HEK293 (cell line): ENCODE measurements at regions of chr12 and their contacts with region 1.

Region 1: GRCh38 chr12:9750276-9751203 is 10.2 kb downstream of the CD69 start:
- H3K4me3 ChIP-seq: no peak overlapping the region
- H3K27ac ChIP-seq: no peak overlapping the region
- H3K4me1 ChIP-seq: no peaks in the 10 kb centered on the region
- CTCF ChIP-seq: no peak; the same call in 1 of the 2 replicates

Region 2: DNA sequence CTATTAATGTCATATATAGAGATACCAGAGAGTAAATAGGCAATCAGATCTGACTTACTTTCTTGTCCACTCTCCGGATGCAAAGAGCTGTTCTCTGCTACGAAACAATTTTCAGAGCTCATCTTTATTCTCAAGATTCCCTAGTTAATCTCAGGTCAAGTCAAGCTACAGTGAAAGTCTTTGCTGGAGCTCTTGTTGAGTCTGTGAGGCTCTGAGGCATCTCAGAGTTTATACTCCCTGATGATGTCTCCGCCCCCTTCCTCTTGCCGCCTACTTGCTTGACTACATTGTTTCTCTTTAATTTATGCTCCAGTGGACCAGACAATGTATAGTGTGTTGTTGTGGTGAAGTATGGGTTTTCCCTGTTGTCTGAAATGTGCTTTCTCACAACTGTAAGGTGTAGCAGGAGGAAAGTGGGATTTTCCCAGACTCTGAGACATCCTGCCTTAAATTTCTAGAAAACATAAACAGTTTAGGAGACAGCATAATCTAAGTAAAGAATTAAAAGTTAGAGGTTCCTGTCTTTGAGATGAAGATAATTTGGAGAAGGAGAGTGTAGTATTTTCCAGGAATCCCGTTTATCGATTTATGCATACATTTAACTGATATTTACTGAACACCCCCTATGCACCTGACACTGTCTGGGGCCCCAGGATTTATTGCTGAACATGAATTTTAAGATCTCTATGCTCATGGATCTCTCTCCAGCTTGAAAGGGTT is 10.3 kb after region 1 on chr12 and contains the start of gene CD69:
- CTCF ChIA-PET with region 1: interaction called, 46 read pairs
- POLR2A ChIA-PET with region 1: no interaction called
- H3K4me3 ChIP-seq: no peak within 1 kb of the TSS
- H3K27ac ChIP-seq: no peak within 1 kb of the TSS
- H3K4me1 ChIP-seq: no peaks in the 10 kb centered on the region
- CTCF ChIP-seq: no peak

Region 3: GRCh38 chr12:9797722-9798619 is 47.4 kb after region 1 on chr12:
- CTCF ChIA-PET with region 1: interaction called, 99 read pairs
- POLR2A ChIA-PET with region 1: no interaction called
- H3K4me3 ChIP-seq: no peak overlapping the region
- H3K27ac ChIP-seq: no peak overlapping the region
- H3K4me1 ChIP-seq: no peaks in the 10 kb centered on the region
- CTCF ChIP-seq: peak; percentile 75

Region 4: GRCh38 chr12:9813821-9814809 is 63.6 kb after region 1 on chr12:
- CTCF ChIA-PET with region 1: interaction called, 22 read pairs
- POLR2A ChIA-PET with region 1: no interaction called
- H3K4me3 ChIP-seq: peak overlapping the region; percentile 28
- H3K27ac ChIP-seq: no peak overlapping the region
- H3K4me1 ChIP-seq: no peaks in the 10 kb centered on the region
- CTCF ChIP-seq: peak; percentile 91

Region 5: GRCh38 chr12:10140001-10140400 is 389.5 kb after region 1 on chr12:
- CTCF ChIA-PET with region 1: interaction called, 74 read pairs
- POLR2A ChIA-PET with region 1: no interaction called
- H3K4me3 ChIP-seq: no peak overlapping the region
- H3K27ac ChIP-seq: no peak overlapping the region
- H3K4me1 ChIP-seq: no peaks in the 10 kb centered on the region
- CTCF ChIP-seq: no peak; the same call in 1 of the 2 replicates

Region 6: GRCh38 chr12:10147714-10148403 is 397.3 kb after region 1 on chr12:
- CTCF ChIA-PET with region 1: interaction called, 74 read pairs
- POLR2A ChIA-PET with region 1: no interaction called
- H3K4me3 ChIP-seq: no peak overlapping the region
- H3K27ac ChIP-seq: no peak overlapping the region
- H3K4me1 ChIP-seq: no peaks in the 10 kb centered on the region
- CTCF ChIP-seq: no peak